SK-N-SH (cell line): ENCODE measurements at regions of chr11 and their contacts with region 1.

Region 1: GRCh38 chr11:8813658-8814057 is 97.3 kb upstream of the AKIP1 start:
- DNase-seq: peak; percentile 78
- H3K4me3 ChIP-seq: no peak overlapping the region; a peak in 1 of 4 replicates
- H3K27ac ChIP-seq: peak overlapping the region; percentile 12 to 48; a peak in 2 of 4 replicates
- H3K4me1 ChIP-seq: peaks cover 33 to 34% of the 10 kb centered on the region in 2 experiments
- H3K27me3 ChIP-seq: no peaks in the 10 kb centered on the region
- CTCF ChIP-seq: peak; percentile 91
- EP300 ChIP-seq: no peak
- RAD21 ChIP-seq: peak; percentile 78

Region 2: GRCh38 chr11:8631395-8632118 is 182.1 kb before region 1 on chr11:
- CTCF ChIA-PET with region 1: no interaction called
- POLR2A ChIA-PET with region 1: no interaction called
- DNase-seq: no peak
- H3K4me3 ChIP-seq: no peak overlapping the region
- H3K27ac ChIP-seq: peak overlapping the region in 1 of 2 experiments; percentile 33; a peak in 1 of 4 replicates
- H3K4me1 ChIP-seq: no peaks in the 10 kb centered on the region
- H3K27me3 ChIP-seq: no peaks in the 10 kb centered on the region
- CTCF ChIP-seq: no peak
- EP300 ChIP-seq: no peak
- RAD21 ChIP-seq: no peak

Region 3: DNA sequence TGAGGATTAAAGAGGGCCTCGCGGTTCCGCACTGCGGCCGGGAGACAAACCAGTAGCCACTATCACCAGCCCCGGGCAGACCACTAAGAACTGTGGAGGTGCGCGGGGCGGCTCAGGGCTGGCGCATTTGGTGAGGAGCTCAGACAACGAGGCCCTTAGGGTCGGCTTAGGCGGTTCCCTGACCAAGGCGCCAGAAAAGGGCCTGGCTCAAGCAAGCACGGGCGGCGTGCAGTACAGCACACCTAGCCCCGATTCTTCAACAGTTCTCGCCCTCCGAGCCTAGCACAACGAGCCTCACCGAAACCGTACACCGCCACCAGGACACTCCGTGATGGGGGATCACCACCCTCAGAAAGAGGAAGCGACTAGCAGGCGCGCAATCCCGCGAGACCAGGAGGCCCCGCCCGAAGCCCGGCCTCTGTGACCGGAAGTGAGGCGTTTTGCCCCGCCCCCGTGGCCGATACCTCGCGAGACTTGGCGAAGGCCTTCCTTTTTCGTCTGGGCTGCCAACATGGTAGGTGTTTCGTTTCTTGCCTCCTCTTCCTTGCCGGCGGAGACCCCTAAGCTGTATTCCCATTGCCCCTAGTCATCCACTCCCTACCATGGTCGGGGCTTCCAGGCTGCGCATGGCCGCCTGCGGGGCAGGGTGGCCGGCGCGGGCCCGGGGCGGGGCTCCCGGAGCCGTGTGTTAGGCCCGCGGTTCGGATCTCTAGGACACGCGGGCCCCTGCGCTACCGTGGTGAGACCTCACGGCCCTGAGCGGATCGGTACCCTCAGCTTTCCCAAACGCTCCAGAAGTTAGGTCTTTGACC is 131.1 kb before region 1 on chr11 and contains the starts of genes RPL27A and TRIM66:
- CTCF ChIA-PET with region 1: interaction called, 3 read pairs
- POLR2A ChIA-PET with region 1: interaction called, 37 read pairs
- DNase-seq: peak; percentile 93
- H3K4me3 ChIP-seq: peak within 1 kb of the TSS; percentile 95 to 99
- H3K27ac ChIP-seq: peak within 1 kb of the TSS; percentile 90 to 95
- H3K4me1 ChIP-seq: peaks cover 14 to 21% of the 10 kb centered on the region in 2 experiments; a peak in 2 of 4 replicates
- H3K27me3 ChIP-seq: no peaks in the 10 kb centered on the region
- CTCF ChIP-seq: no peak; the same call in 1 of the 2 replicates
- EP300 ChIP-seq: no peak
- RAD21 ChIP-seq: no peak
- polyA plus RNA-seq, gene RPL27A: 752 and 1,162 TPM in 2 replicates
- polyA plus RNA-seq, gene TRIM66: 6.4 and 8.0 TPM in 2 replicates

Region 4: GRCh38 chr11:8688414-8689362 is 125.0 kb before region 1 on chr11:
- CTCF ChIA-PET with region 1: interaction called, 5 read pairs
- POLR2A ChIA-PET with region 1: interaction called, 37 read pairs
- DNase-seq: peak; percentile 95
- H3K4me3 ChIP-seq: peak overlapping the region; percentile 68
- H3K27ac ChIP-seq: peak overlapping the region; percentile 90 to 96
- H3K4me1 ChIP-seq: peaks cover 24 to 32% of the 10 kb centered on the region in 2 experiments; a peak in 3 of 4 replicates
- H3K27me3 ChIP-seq: no peaks in the 10 kb centered on the region
- CTCF ChIP-seq: peak; percentile 36
- EP300 ChIP-seq: peak in 1 of 2 experiments; percentile 40; a peak in 1 of 4 replicates
- RAD21 ChIP-seq: peak; percentile 50

Region 5: GRCh38 chr11:8826139-8826786 is 12.6 kb after region 1 on chr11:
- CTCF ChIA-PET with region 1: interaction called, 17 read pairs
- POLR2A ChIA-PET with region 1: interaction called, 3 read pairs
- DNase-seq: no peak
- H3K4me3 ChIP-seq: no peak overlapping the region
- H3K27ac ChIP-seq: peak overlapping the region; percentile 50 to 85; a peak in 3 of 4 replicates
- H3K4me1 ChIP-seq: peaks cover 9 to 19% of the 10 kb centered on the region in 2 experiments; a peak in 3 of 4 replicates
- H3K27me3 ChIP-seq: no peaks in the 10 kb centered on the region
- CTCF ChIP-seq: no peak
- EP300 ChIP-seq: no peak
- RAD21 ChIP-seq: no peak

Region 6: DNA sequence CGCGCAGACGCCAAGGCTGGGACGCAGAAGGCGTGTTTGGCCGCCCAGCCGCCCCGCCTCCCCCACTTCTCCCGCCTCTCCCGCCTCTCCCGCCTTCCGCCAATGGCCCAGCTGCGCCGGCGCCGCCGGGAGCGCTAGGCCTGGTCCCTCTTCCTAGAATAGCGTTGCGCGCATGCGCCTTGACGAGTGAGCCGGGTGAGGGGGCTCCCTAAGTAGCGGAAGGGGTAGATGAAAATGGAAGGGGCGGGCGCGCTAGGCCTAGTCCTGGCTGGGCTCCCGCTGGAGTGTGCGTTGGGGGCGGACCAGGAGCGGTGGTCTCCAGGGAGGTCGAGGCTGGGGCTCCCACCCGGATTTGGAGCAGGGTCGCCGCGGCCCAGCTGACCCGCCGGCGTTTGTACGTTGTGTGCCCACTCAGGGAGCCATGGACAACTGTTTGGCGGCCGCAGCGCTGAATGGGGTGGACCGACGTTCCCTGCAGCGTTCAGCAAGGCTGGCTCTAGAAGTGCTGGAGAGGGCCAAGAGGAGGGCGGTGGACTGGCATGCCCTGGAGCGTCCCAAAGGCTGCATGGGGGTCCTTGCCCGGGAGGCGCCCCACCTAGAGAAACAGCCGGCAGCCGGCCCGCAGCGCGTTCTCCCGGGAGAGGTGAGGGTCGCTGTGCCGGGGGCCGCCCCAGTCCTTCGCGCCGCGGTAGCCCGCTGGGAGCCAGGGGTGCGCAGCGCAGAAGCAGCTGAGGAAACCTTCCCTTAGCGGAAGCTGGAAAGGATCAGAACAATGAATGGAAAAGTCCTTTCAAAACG is 97.6 kb after region 1 on chr11 and contains the start of gene AKIP1:
- CTCF ChIA-PET with region 1: no interaction called
- POLR2A ChIA-PET with region 1: no interaction called
- DNase-seq: peak; percentile 99
- H3K4me3 ChIP-seq: peak within 1 kb of the TSS; percentile 77 to 90
- H3K27ac ChIP-seq: peak within 1 kb of the TSS; percentile 88 to 89
- H3K4me1 ChIP-seq: peaks cover 17 to 30% of the 10 kb centered on the region in 2 experiments
- H3K27me3 ChIP-seq: no peaks in the 10 kb centered on the region
- CTCF ChIP-seq: no peak
- EP300 ChIP-seq: no peak
- RAD21 ChIP-seq: no peak
- polyA plus RNA-seq, gene AKIP1: 47.9 and 55.3 TPM in 2 replicates